B cell (primary cell): ENCODE measurements at regions of chr12 and their contacts with region 1.

Region 1: GRCh38 chr12:93502802-93503623 is 35.7 kb downstream of the MRPL42 start:
- DNase-seq: peak; percentile 67
- ATAC-seq: no peak
- H3K4me3 ChIP-seq: no peak overlapping the region
- H3K4me3 Mint-ChIP-seq: no peak overlapping the region
- H3K27ac ChIP-seq: no peak overlapping the region
- H3K27ac Mint-ChIP-seq: no peak overlapping the region
- H3K4me1 ChIP-seq: no peaks in the 10 kb centered on the region
- H3K4me1 Mint-ChIP-seq: peaks cover 5% of the 10 kb centered on the region
- H3K27me3 ChIP-seq: no peaks in the 10 kb centered on the region
- H3K27me3 Mint-ChIP-seq: no peaks in the 10 kb centered on the region
- CTCF ChIP-seq: peak; percentile 92

Region 2: GRCh38 chr12:93514853-93515252 is 11.8 kb after region 1 on chr12:
- CTCF ChIA-PET with region 1: interaction called, 13 read pairs
- POLR2A ChIA-PET with region 1: no interaction called
- intact Hi-C with region 1: no loop called
- DNase-seq: no peak
- ATAC-seq: no peak
- H3K4me3 ChIP-seq: no peak overlapping the region
- H3K4me3 Mint-ChIP-seq: no peak overlapping the region
- H3K27ac ChIP-seq: no peak overlapping the region
- H3K27ac Mint-ChIP-seq: no peak overlapping the region
- H3K4me1 ChIP-seq: no peaks in the 10 kb centered on the region
- H3K4me1 Mint-ChIP-seq: no peaks in the 10 kb centered on the region
- H3K27me3 ChIP-seq: no peaks in the 10 kb centered on the region
- H3K27me3 Mint-ChIP-seq: no peaks in the 10 kb centered on the region
- CTCF ChIP-seq: no peak

Region 3: DNA sequence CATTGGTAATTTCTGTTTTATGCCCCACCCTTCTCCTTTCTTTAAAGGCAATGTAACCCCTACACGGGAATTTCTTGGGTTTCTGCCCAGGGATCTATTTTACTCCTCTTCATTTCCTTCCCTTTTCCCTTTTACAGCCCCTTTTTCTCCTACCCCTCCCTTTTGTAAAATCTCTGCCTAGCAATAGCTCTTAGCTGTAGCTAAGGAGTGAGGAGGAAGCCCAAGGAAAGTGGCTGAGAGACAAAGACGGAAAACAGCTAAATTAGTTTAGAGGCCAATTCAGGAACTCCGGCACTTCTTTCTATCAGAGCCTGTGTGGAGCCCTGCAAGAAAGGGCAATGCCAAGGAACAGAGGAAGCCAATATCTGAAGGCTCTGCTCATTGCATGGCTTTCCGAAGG is 109.8 kb after region 1 on chr12:
- CTCF ChIA-PET with region 1: no interaction called
- POLR2A ChIA-PET with region 1: no interaction called
- intact Hi-C with region 1: no loop called
- DNase-seq: no peak
- ATAC-seq: no peak
- H3K4me3 ChIP-seq: no peak overlapping the region
- H3K4me3 Mint-ChIP-seq: no peak overlapping the region
- H3K27ac ChIP-seq: no peak overlapping the region
- H3K27ac Mint-ChIP-seq: no peak overlapping the region
- H3K4me1 ChIP-seq: no peaks in the 10 kb centered on the region
- H3K4me1 Mint-ChIP-seq: no peaks in the 10 kb centered on the region
- H3K27me3 ChIP-seq: peaks cover 0 to 9% (median 0%) of the 10 kb centered on the region in 4 experiments
- H3K27me3 Mint-ChIP-seq: peaks cover 23% of the 10 kb centered on the region
- CTCF ChIP-seq: no peak

Region 4: GRCh38 chr12:93742110-93742934 is 239.3 kb after region 1 on chr12:
- CTCF ChIA-PET with region 1: interaction called, 15 read pairs
- POLR2A ChIA-PET with region 1: no interaction called
- intact Hi-C with region 1: loop called (anchors 2 kb)
- DNase-seq: peak; percentile 73
- ATAC-seq: peak; percentile 94
- H3K4me3 ChIP-seq: peak overlapping the region; percentile 59 to 93 (median 86)
- H3K4me3 Mint-ChIP-seq: peak overlapping the region; percentile 92
- H3K27ac ChIP-seq: peak overlapping the region; percentile 48 to 68
- H3K27ac Mint-ChIP-seq: peak overlapping the region; percentile 78
- H3K4me1 ChIP-seq: peaks cover 8 to 15% of the 10 kb centered on the region in 2 donors
- H3K4me1 Mint-ChIP-seq: peaks cover 29% of the 10 kb centered on the region
- H3K27me3 ChIP-seq: no peaks in the 10 kb centered on the region
- H3K27me3 Mint-ChIP-seq: no peaks in the 10 kb centered on the region
- CTCF ChIP-seq: peak; percentile 26

Region 5: DNA sequence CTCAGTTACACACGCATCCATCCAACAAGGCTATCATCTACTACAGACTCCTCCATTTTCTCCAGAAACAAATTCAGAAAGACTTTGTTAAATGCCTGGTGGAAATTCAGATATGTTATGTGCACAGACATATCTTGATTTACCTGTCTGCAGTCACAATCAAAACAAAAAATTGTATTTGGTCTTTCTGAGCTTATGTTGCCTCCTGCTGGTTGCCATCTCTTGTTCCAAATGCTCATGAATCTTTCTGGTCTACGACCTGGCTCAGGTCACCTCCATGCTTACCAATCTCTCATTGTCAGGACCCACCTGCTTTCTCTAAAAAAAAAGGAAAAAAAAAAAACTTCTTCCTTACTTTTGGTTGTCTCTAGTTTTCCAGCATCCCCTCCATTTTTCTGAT is 476.2 kb after region 1 on chr12:
- CTCF ChIA-PET with region 1: interaction called, 8 read pairs
- POLR2A ChIA-PET with region 1: no interaction called
- intact Hi-C with region 1: loop called (anchors 2 kb)
- DNase-seq: peak; percentile 27
- ATAC-seq: no peak
- H3K4me3 ChIP-seq: no peak overlapping the region
- H3K4me3 Mint-ChIP-seq: no peak overlapping the region
- H3K27ac ChIP-seq: no peak overlapping the region
- H3K27ac Mint-ChIP-seq: no peak overlapping the region
- H3K4me1 ChIP-seq: no peaks in the 10 kb centered on the region
- H3K4me1 Mint-ChIP-seq: no peaks in the 10 kb centered on the region
- H3K27me3 ChIP-seq: peaks cover 0 to 4% (median 0%) of the 10 kb centered on the region in 4 experiments
- H3K27me3 Mint-ChIP-seq: peaks cover 32% of the 10 kb centered on the region
- CTCF ChIP-seq: peak; percentile 35

Region 6: GRCh38 chr12:94074980-94075928 is 572.2 kb after region 1 on chr12:
- CTCF ChIA-PET with region 1: interaction called, 10 read pairs
- POLR2A ChIA-PET with region 1: no interaction called
- intact Hi-C with region 1: no loop called
- DNase-seq: no peak
- ATAC-seq: no peak
- H3K4me3 ChIP-seq: no peak overlapping the region
- H3K4me3 Mint-ChIP-seq: no peak overlapping the region
- H3K27ac ChIP-seq: no peak overlapping the region
- H3K27ac Mint-ChIP-seq: no peak overlapping the region
- H3K4me1 ChIP-seq: no peaks in the 10 kb centered on the region
- H3K4me1 Mint-ChIP-seq: no peaks in the 10 kb centered on the region
- H3K27me3 ChIP-seq: peaks cover 0 to 7% (median 2%) of the 10 kb centered on the region in 4 experiments
- H3K27me3 Mint-ChIP-seq: peaks cover 47% of the 10 kb centered on the region
- CTCF ChIP-seq: no peak

Region 7: GRCh38 chr12:94112132-94112531 is 609.1 kb after region 1 on chr12:
- CTCF ChIA-PET with region 1: interaction called, 30 read pairs
- POLR2A ChIA-PET with region 1: no interaction called
- intact Hi-C with region 1: no loop called
- DNase-seq: no peak
- ATAC-seq: no peak
- H3K4me3 ChIP-seq: no peak overlapping the region
- H3K4me3 Mint-ChIP-seq: no peak overlapping the region
- H3K27ac ChIP-seq: no peak overlapping the region
- H3K27ac Mint-ChIP-seq: no peak overlapping the region
- H3K4me1 ChIP-seq: no peaks in the 10 kb centered on the region
- H3K4me1 Mint-ChIP-seq: no peaks in the 10 kb centered on the region
- H3K27me3 ChIP-seq: no peaks in the 10 kb centered on the region
- H3K27me3 Mint-ChIP-seq: peaks cover 9% of the 10 kb centered on the region
- CTCF ChIP-seq: no peak

Region 8: GRCh38 chr12:94532490-94533422 is 1029.7 kb after region 1 on chr12:
- CTCF ChIA-PET with region 1: interaction called, 5 read pairs
- POLR2A ChIA-PET with region 1: no interaction called
- intact Hi-C with region 1: loop called (anchors 2 kb)
- DNase-seq: peak; percentile 78
- ATAC-seq: peak; percentile 81
- H3K4me3 ChIP-seq: no peak overlapping the region
- H3K4me3 Mint-ChIP-seq: no peak overlapping the region
- H3K27ac ChIP-seq: no peak overlapping the region
- H3K27ac Mint-ChIP-seq: no peak overlapping the region
- H3K4me1 ChIP-seq: no peaks in the 10 kb centered on the region
- H3K4me1 Mint-ChIP-seq: peaks cover 5% of the 10 kb centered on the region
- H3K27me3 ChIP-seq: no peaks in the 10 kb centered on the region
- H3K27me3 Mint-ChIP-seq: peaks cover 3% of the 10 kb centered on the region
- CTCF ChIP-seq: peak; percentile 81